Activated T-helper 1 cell treated with anti-CD3 and anti-CD28 coated beads, Interleukin-12 subunit alpha, Interleukin-12 subunit beta, Interleukin-2, Interleukin-4 antibody, amounts not matched to agents 30 ng/mL and 10 ng/mL and 1 ng/mL, durations not matched to agents 14 hours and 24 hours and 36 hours (primary cell): ENCODE measurements at regions of chr9 and their contacts with region 1.

Region 1: DNA sequence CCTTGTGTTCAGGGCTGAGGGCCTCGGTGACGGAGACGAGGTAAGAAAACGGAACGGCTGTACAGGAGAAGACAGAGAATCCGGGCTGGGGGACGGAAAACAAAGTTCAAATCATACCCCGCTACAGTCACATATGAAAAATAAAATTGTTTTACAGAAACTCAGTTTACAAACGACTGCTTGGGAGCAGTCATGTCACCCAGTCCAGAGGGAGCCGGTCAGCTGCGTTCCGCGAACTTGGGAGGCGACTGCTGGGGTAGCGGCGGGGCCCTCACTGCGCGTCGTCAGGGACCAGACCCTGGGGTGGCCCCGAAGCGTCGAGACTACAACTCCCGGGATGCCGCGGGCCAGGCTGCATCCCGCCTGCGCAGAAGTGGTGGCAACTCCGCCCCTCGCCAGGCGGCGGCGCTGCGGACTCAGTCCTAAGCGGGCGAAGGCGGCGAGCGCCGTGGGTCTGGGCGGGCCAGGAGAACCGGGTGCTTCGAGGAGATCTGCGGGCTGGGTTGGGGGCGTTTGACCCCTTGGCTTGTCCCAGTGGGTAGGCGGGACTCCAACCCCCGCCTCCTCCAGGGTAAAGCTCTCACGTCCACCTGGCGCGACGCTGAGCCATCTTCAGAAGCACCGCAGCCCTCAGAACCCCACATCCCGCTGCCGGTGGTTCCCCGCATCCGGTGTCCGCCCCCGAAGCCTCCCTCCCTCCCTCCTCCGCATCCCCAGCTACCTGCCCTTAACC is 4.0 kb downstream of the SIT1 start:
- DNase-seq: peak; percentile 91
- H3K4me3 Mint-ChIP-seq: peak overlapping the region; percentile 92
- H3K27ac Mint-ChIP-seq: peak overlapping the region; percentile 93
- H3K4me1 Mint-ChIP-seq: peaks cover 49% of the 10 kb centered on the region
- H3K27me3 Mint-ChIP-seq: peaks cover 1% of the 10 kb centered on the region

Region 2: DNA sequence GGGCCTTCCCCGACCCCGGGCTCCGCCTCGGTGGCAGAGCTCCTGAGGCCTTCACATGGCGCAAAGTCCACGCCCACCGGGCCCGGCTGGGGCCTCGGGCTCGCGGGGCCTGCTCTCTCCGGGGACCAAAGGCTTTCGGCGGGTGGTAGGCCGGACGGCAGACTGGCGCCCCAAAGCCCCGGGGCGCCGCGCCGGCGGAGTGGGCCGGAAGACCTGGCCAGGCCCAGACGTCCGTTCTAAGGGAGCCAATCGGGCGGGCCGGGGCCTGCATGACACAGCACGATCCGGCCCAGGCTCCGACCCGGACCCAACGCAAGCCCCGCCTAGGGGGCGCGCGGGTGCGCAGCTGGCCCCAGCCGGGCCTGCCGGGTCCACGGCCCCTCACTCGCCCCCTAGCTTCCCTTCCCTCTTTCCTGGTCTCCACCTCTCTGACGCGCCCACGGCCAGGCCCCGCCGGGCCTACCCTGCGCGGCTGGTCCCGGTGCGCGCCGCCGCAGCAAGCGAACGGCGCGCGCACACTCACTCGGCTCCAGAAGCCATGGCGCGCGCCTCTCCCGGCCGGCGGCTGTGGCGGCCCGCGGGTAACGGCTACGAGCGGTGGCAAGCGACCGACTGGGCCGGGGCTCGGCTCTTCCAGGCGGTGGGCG is 574.8 kb before region 1 on chr9:
- intact Hi-C with region 1: loop called (anchors 5 kb)
- DNase-seq: peak; percentile 72
- H3K4me3 Mint-ChIP-seq: peak overlapping the region; percentile 95
- H3K27ac Mint-ChIP-seq: peak overlapping the region; percentile 92
- H3K4me1 Mint-ChIP-seq: peaks cover 55% of the 10 kb centered on the region
- H3K27me3 Mint-ChIP-seq: no peaks in the 10 kb centered on the region

Region 3: DNA sequence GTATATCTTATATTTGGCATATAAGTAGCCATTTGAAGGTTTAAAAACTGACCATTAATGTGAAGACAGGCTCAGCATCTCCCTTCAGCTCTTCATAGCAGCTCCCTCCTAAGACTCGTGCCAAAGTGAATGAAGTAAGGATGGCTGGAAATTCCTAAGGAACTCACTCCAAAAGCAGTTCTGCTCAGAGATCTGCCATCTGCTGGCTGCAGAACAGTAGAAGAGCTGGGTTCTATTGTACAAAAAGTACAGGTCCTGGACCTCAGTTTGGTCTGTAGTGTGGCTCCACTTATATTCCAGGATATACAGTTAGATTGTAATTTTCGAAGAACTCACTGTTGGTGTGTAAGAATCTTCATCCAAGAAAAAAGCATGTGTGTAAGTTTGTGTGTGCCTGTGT is 261.7 kb before region 1 on chr9:
- intact Hi-C with region 1: no loop called
- DNase-seq: no peak
- H3K4me3 Mint-ChIP-seq: no peak overlapping the region
- H3K27ac Mint-ChIP-seq: no peak overlapping the region
- H3K4me1 Mint-ChIP-seq: no peaks in the 10 kb centered on the region
- H3K27me3 Mint-ChIP-seq: no peaks in the 10 kb centered on the region

Region 4: DNA sequence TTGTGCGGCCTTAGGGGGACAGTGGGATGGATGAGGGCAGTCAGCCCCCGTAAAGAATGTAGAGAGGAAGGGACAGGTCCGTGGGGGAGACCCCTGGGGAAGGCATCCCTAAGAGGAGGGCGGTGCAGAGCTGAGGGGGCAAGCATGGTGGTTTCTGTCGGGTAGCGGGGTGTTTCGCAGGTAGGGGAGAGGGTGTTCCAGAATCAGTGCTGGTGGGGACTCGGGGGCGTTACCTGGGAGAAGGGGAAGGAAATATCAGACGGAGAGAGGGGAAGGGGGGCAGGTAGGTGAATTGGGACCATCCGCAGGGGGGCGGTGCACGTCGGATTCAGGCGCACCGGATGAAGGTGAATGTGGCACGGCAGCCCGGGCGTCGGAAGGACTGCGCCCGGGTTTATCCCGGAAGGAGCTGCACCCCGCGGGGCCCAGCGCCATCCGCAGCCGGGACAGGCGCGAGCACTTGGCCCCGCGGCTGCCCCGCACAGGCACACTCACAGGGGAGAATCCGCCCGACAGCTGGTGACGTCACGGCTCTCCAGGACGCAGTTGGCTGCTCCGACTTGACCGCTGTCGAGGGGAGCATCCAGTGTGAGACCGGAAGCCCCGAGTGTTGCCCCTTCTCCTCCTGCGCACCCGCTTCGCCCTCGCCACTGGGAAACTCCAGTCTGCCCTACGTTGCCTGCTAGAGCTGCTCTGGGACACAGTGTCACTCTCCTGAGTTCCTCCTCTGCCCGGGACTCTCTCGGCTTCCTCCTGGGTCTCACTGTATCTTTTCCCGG is 29.8 kb before region 1 on chr9:
- intact Hi-C with region 1: loop called (anchors 1 kb)
- DNase-seq: peak; percentile 57
- H3K4me3 Mint-ChIP-seq: peak overlapping the region; percentile 69
- H3K27ac Mint-ChIP-seq: peak overlapping the region; percentile 92
- H3K4me1 Mint-ChIP-seq: peaks cover 65% of the 10 kb centered on the region
- H3K27me3 Mint-ChIP-seq: peaks cover 2% of the 10 kb centered on the region

Region 5: GRCh38 chr9:35657546-35658136 is 10.9 kb after region 1 on chr9 and contains the start of gene RMRP:
- intact Hi-C with region 1: loop called (anchors 1 kb)
- DNase-seq: peak; percentile 88
- H3K4me3 Mint-ChIP-seq: peak within 1 kb of the TSS; percentile 84
- H3K27ac Mint-ChIP-seq: peak within 1 kb of the TSS; percentile 99
- H3K4me1 Mint-ChIP-seq: peaks cover 59% of the 10 kb centered on the region
- H3K27me3 Mint-ChIP-seq: peaks cover 2% of the 10 kb centered on the region
- total RNA-seq, gene RMRP: 5,317 and 5,787 TPM in 2 replicates

Region 6: DNA sequence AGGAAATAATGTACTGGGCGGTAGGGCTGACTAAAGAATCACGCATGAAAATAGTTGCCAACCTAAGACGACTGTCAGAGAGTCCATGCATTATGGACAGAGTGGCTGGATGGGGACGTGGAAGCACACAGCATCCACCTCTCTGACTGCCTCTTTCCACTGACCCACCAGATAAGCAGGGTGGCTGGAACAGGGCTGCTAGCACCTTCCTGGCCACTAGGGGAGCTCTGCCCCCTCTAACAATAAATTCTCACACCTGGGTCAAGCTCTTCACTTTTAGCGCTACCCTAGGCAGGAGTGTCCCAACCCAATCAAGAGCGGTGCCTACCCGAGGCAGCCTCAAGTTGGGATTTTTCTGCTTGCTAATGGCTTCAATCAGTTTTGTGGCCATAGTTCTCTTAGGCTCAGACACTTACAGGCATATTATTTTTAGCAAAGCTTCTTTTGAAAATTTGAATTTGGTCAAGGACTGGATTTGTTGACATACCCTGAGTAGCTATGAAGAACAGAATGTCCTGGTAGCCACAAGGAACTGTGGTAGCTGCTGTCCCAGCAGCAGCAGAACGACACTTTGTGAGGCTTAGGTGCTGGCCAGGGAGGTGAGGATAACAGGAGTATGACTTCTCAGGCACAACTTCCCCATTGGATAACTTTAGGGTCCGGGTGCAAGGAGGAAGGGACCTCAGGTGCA is 50.0 kb after region 1 on chr9:
- intact Hi-C with region 1: loop called (anchors 2 kb)
- DNase-seq: peak; percentile 23
- H3K4me3 Mint-ChIP-seq: no peak overlapping the region
- H3K27ac Mint-ChIP-seq: no peak overlapping the region
- H3K4me1 Mint-ChIP-seq: peaks cover 5% of the 10 kb centered on the region
- H3K27me3 Mint-ChIP-seq: no peaks in the 10 kb centered on the region

Region 7: DNA sequence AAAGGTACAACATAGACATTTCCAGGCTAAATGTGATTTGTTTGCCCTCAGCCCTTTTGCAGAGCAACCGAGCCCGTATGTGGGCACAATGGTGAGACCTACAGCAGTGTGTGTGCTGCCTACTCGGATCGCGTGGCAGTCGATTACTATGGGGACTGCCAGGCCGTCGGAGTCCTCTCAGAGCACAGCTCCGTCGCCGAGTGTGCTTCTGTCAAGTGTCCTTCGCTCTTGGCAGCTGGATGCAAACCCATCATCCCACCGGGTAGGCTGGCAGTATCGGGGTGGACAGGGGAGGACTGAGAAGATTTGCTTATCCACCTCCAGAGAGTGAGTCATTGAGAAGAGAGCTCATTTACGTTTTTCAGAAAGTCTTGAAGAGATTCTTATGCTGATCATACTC is 472.0 kb after region 1 on chr9:
- intact Hi-C with region 1: no loop called
- DNase-seq: no peak
- H3K4me3 Mint-ChIP-seq: no peak overlapping the region
- H3K27ac Mint-ChIP-seq: no peak overlapping the region
- H3K4me1 Mint-ChIP-seq: no peaks in the 10 kb centered on the region
- H3K27me3 Mint-ChIP-seq: no peaks in the 10 kb centered on the region